K562 (cell line): ENCODE measurements at regions of chr2 and their contacts with region 1.

Region 1: GRCh38 chr2:70086838-70087701 is at the start of gene PCBP1:
- DNase-seq: peak; percentile 94 to 97 (median 96)
- ATAC-seq: peak; percentile 34
- H3K4me3 ChIP-seq: peak within 1 kb of the TSS; percentile 90
- H3K27ac ChIP-seq: peak within 1 kb of the TSS; percentile 100
- H3K4me1 ChIP-seq: peaks cover 13 to 43% of the 10 kb centered on the region in 2 experiments
- H3K27me3 ChIP-seq: no peaks in the 10 kb centered on the region
- CTCF ChIP-seq: peak in 1 of 3 experiments; percentile 8; a peak in 1 of 6 replicates
- EP300 ChIP-seq: no peak; the same call in 1 of the 2 replicates
- POLR2A ChIP-seq: peak; percentile 80
- RAD21 ChIP-seq: peak in 1 of 2 experiments; percentile 9; a peak in 2 of 4 replicates
- polyA plus RNA-seq, gene PCBP1: 19.2 to 23.9 TPM

Region 2: DNA sequence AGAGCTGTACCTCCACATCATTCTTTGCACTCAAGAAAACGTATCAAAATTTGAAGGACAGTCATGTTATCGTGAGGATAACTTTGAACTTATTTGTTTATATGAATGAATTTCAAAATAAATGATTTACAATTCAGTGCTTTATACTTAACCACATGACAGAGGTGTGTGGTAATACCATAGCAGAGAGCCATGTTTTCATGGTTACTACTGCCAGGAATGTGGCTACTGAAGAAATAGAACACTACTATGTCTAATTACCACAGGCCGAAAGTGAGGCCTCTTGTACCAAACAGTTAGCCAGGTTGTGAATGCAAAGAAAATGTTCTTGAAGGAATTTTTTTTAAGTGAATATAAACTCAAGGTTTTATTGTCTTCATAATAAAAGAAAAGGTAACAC is 492.7 kb before region 1 on chr2:
- CTCF ChIA-PET with region 1: no interaction called
- POLR2A ChIA-PET with region 1: no interaction called
- in situ Hi-C with region 1: no loop called
- intact Hi-C with region 1: no loop called
- DNase-seq: no peak
- ATAC-seq: no peak
- H3K4me3 ChIP-seq: no peak overlapping the region
- H3K27ac ChIP-seq: no peak overlapping the region
- H3K4me1 ChIP-seq: peaks cover 0 to 28% of the 10 kb centered on the region in 2 experiments; a peak in 3 of 5 replicates
- H3K27me3 ChIP-seq: no peaks in the 10 kb centered on the region
- CTCF ChIP-seq: no peak
- EP300 ChIP-seq: no peak
- POLR2A ChIP-seq: no peak
- RAD21 ChIP-seq: no peak

Region 3: GRCh38 chr2:70070541-70071268 is 16.4 kb before region 1 on chr2:
- CTCF ChIA-PET with region 1: no interaction called
- POLR2A ChIA-PET with region 1: interaction called, 21 read pairs
- in situ Hi-C with region 1: no loop called
- intact Hi-C with region 1: no loop called
- DNase-seq: peak; percentile 75 to 87 (median 81)
- ATAC-seq: peak; percentile 96
- H3K4me3 ChIP-seq: no peak overlapping the region
- H3K27ac ChIP-seq: peak overlapping the region; percentile 47; the same call in 1 of the 3 replicates
- H3K4me1 ChIP-seq: peaks cover 2 to 5% of the 10 kb centered on the region in 2 experiments; a peak in 3 of 5 replicates
- H3K27me3 ChIP-seq: no peaks in the 10 kb centered on the region
- CTCF ChIP-seq: peak; percentile 88 to 95 (median 89)
- EP300 ChIP-seq: no peak
- POLR2A ChIP-seq: no peak
- RAD21 ChIP-seq: peak; percentile 91 to 94

Region 4: GRCh38 chr2:70104231-70105111 is 17.4 kb after region 1 on chr2:
- CTCF ChIA-PET with region 1: no interaction called
- POLR2A ChIA-PET with region 1: interaction called, 26 read pairs
- in situ Hi-C with region 1: no loop called
- intact Hi-C with region 1: loop called (anchors 1 kb)
- DNase-seq: peak; percentile 73 to 90 (median 77)
- ATAC-seq: peak; percentile 63
- H3K4me3 ChIP-seq: peak overlapping the region; percentile 17; the same call in 1 of the 2 replicates
- H3K27ac ChIP-seq: peak overlapping the region; percentile 75
- H3K4me1 ChIP-seq: peaks cover 39 to 46% of the 10 kb centered on the region in 2 experiments
- H3K27me3 ChIP-seq: no peaks in the 10 kb centered on the region
- CTCF ChIP-seq: no peak
- EP300 ChIP-seq: peak; percentile 57; the same call in 1 of the 2 replicates
- POLR2A ChIP-seq: peak; percentile 54; the same call in 1 of the 2 replicates
- RAD21 ChIP-seq: peak in 1 of 2 experiments; percentile 23; a peak in 3 of 4 replicates

Region 5: DNA sequence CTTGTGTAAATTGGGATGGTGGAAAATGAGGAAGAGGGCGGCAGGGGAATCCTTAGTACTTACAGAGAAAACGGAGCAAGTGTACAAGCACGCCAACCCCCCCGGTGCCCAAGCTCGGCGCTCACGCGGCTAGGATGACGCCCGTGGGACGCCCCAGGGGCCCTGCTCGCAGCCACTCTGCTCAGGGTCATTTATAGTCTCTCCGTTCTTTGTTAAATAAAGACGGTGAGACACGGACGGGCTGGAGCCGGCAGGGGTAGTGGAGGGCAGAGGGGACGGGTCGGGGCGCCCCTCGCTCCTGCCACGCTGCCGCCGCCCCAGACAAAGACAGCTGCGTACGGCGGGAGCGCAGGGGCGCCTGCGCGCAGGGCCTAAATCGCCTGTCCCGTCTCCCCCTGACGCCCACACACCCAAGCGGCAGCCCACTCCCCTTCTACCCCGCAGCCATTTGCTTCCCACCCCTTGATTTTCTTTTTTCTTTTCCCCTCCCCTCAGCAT is 38.0 kb after region 1 on chr2:
- CTCF ChIA-PET with region 1: no interaction called
- POLR2A ChIA-PET with region 1: interaction called, 13 read pairs
- in situ Hi-C with region 1: loop called (anchors 5 kb)
- intact Hi-C with region 1: loop called (anchors 2 kb)
- DNase-seq: peak; percentile 62 to 69 (median 64)
- ATAC-seq: peak; percentile 59
- H3K4me3 ChIP-seq: peak overlapping the region; percentile 61
- H3K27ac ChIP-seq: peak overlapping the region; percentile 100
- H3K4me1 ChIP-seq: peaks cover 48 to 52% of the 10 kb centered on the region in 2 experiments
- H3K27me3 ChIP-seq: no peaks in the 10 kb centered on the region
- CTCF ChIP-seq: no peak
- EP300 ChIP-seq: no peak
- POLR2A ChIP-seq: no peak
- RAD21 ChIP-seq: no peak

Region 6: DNA sequence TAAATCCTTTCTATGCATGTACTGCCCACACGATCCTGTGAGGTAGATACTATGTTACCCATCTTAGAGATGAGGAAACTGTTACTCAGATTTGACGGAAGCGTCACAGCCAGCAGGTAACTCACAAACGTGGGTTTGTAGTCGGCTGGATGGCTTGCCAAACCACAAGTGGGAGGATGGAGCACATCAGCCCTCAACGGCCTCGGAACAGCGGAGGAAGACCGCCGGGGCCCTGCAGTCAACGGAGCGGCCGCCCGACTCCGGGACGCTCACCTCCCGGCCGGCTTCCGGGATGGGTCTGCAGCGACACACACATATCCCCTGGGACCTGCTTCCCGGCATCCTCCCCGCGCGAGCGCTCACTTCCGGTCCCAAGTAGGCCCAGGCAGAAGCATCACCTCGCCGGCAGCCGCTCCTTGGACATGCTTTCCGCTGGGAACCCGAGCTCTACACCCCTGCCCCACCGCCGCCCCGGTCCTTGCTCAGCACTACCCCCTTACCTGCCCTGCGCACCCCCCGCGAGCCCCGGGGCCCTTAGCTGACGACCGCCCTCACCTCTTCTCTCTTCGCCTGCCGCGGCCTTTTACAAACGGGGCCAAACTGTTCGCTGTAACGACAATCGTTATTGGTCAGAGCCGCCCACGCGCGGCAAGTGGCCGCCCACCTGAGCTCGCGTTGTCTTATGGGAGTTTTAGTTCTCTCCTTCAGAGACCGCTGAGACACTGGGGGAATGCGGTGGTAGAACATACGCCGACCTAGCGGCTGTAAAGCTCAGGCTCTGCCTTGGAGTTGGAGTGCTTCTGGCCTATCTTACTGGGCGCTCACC is 103.6 kb after region 1 on chr2 and contains the start of gene C2orf42:
- CTCF ChIA-PET with region 1: no interaction called
- POLR2A ChIA-PET with region 1: no interaction called
- in situ Hi-C with region 1: no loop called
- intact Hi-C with region 1: loop called (anchors 2 kb)
- DNase-seq: peak; percentile 91 to 99 (median 96)
- ATAC-seq: peak; percentile 96
- H3K4me3 ChIP-seq: peak within 1 kb of the TSS; percentile 62
- H3K27ac ChIP-seq: peak within 1 kb of the TSS; percentile 85
- H3K4me1 ChIP-seq: peaks cover 3 to 4% of the 10 kb centered on the region in 2 experiments; a peak in 2 of 5 replicates
- H3K27me3 ChIP-seq: no peaks in the 10 kb centered on the region
- CTCF ChIP-seq: peak; percentile 19 to 44 (median 35); a peak in 5 of 6 replicates
- EP300 ChIP-seq: 0 out of 2 replicates have a peak, but pooled peaks have one; percentile 3
- POLR2A ChIP-seq: peak; percentile 96
- RAD21 ChIP-seq: peak; percentile 7 to 26; a peak in 3 of 4 replicates
- polyA plus RNA-seq, gene C2orf42: 4.6 to 4.9 TPM

Region 7: GRCh38 chr2:70596293-70596692 is 509.2 kb after region 1 on chr2:
- CTCF ChIA-PET with region 1: no interaction called
- POLR2A ChIA-PET with region 1: no interaction called
- in situ Hi-C with region 1: no loop called
- intact Hi-C with region 1: no loop called
- DNase-seq: no peak
- ATAC-seq: no peak
- H3K4me3 ChIP-seq: no peak overlapping the region
- H3K27ac ChIP-seq: no peak overlapping the region
- H3K4me1 ChIP-seq: no peaks in the 10 kb centered on the region
- H3K27me3 ChIP-seq: peaks cover 2 to 17% of the 10 kb centered on the region in 2 experiments; a peak in 2 of 5 replicates
- CTCF ChIP-seq: no peak
- EP300 ChIP-seq: no peak
- POLR2A ChIP-seq: no peak
- RAD21 ChIP-seq: no peak